ENCODE measurements at regions of chrX and their contacts with region 1.

Region 1: GRCh38 chrX:14029425-14030173 is at the start of gene GEMIN8:
- DNase-seq: peak; percentile 67 to 73
- ATAC-seq: peak; percentile 90
- H3K4me3 ChIP-seq: peak within 1 kb of the TSS; percentile 66 to 81 (median 77)
- H3K27ac ChIP-seq: peak within 1 kb of the TSS; percentile 74 to 90 (median 82)
- H3K4me1 ChIP-seq: peaks cover 4 to 30% of the 10 kb centered on the region in 2 donors
- H3K27me3 ChIP-seq: no peaks in the 10 kb centered on the region
- CTCF ChIP-seq: no peak
- POLR2A ChIP-seq: peak; percentile 56 to 64
- total RNA-seq, gene GEMIN8: 6.4 to 8.8 (median 6.9) TPM

Region 2: GRCh38 chrX:13452283-13452682 is 577.3 kb before region 1 on chrX:
- in situ Hi-C with region 1: no loop called
- intact Hi-C with region 1: no loop called
- DNase-seq: no peak
- ATAC-seq: no peak
- H3K4me3 ChIP-seq: no peak overlapping the region
- H3K27ac ChIP-seq: no peak overlapping the region
- H3K4me1 ChIP-seq: no peaks in the 10 kb centered on the region
- H3K27me3 ChIP-seq: no peaks in the 10 kb centered on the region
- CTCF ChIP-seq: no peak
- POLR2A ChIP-seq: no peak

Region 3: DNA sequence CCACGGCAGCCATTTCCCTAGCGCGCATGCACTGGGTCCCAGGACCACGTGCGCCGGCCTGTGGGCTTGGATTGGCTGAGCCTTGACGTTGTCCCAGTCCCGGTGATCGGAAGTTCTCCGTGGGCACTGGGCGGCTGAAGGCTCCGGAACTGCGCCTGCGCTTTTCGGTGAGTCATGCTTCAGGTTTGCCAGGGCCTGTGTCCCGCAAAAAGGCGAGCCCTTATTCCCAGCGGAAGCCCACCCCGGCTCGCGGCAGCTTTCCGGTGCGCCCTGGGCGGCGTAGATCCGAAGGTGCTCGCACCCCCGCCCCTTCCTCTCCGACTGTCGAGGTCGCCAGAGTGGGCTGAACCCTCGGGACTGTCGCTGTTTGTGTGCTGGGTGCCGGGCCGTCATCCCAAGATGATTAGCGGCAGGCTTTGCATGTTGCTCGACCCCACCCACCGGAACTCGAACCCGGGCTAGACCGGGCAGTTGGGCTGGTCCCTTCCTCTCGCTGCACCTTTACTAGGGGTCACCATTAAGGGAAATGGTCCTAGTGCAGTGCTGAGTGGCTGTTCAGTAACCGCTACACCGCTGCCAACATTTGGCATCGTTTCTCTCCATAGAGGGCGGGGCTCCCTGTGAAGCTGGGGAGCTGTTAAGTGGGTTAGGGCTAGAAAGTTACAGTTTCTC is 376.4 kb before region 1 on chrX and contains the start of gene TCEANC:
- in situ Hi-C with region 1: loop called in 3 of 4 experiments (anchors 5 to 25 kb)
- intact Hi-C with region 1: loop called (anchors 1 kb)
- DNase-seq: peak; percentile 92 to 94
- ATAC-seq: peak; percentile 98 to 99
- H3K4me3 ChIP-seq: peak within 1 kb of the TSS; percentile 72 to 83 (median 78)
- H3K27ac ChIP-seq: peak within 1 kb of the TSS; percentile 91 to 97 (median 94)
- H3K4me1 ChIP-seq: peaks cover 14 to 15% of the 10 kb centered on the region in 2 donors
- H3K27me3 ChIP-seq: no peaks in the 10 kb centered on the region
- CTCF ChIP-seq: no peak
- POLR2A ChIP-seq: peak; percentile 61 to 62
- total RNA-seq, gene TCEANC: 2.9 to 4.1 (median 3.3) TPM

Region 4: DNA sequence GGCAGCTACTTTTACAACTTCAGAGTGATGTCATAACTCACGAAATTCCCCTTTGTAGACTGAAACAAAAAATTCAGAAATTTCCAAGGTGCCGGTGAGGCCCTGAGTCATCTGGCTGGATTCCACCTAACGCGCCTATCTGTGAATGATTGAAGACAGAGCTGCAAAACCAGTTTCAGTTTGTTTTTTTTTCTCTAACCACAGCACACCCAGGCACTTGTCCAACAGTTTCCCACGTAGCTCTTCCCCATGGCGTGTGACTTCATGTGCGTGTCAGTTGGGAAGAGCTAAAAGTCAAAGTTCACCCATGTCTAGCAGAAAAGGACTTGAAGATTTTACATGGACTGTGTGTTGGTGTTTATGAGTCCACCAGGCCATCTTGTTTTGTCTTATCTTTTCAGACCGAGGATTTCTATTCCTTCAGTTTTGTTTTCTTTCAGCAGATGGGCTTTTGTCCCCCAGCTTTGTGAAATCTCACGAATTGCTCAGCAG is 360.3 kb before region 1 on chrX:
- in situ Hi-C with region 1: loop called in 2 of 4 experiments (anchors 10 to 25 kb)
- intact Hi-C with region 1: no loop called
- DNase-seq: no peak
- ATAC-seq: no peak
- H3K4me3 ChIP-seq: no peak overlapping the region
- H3K27ac ChIP-seq: no peak overlapping the region
- H3K4me1 ChIP-seq: no peaks in the 10 kb centered on the region
- H3K27me3 ChIP-seq: no peaks in the 10 kb centered on the region
- CTCF ChIP-seq: no peak
- POLR2A ChIP-seq: no peak

Region 5: DNA sequence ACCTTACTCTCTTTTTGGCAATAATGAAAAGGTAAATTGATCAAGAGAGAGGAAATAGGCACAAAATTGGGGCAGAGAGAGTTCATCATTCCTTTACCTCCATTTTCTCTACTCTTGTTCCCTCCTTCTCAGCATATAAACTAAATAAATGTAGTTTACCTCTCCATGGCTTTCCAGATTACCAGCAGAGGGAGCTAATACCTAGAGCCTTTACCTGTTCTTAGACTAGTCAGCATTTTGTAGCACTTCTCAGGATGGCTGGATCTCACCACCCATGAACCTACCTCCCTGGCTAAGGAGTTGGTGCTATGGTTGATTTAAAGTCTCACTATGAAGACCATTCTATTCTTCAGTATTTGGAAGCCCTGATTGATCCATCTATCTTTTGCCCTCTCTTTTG is 279.4 kb before region 1 on chrX:
- in situ Hi-C with region 1: loop called in 1 of 4 experiments (anchors 25 kb)
- intact Hi-C with region 1: loop called (anchors 2 kb)
- DNase-seq: no peak
- ATAC-seq: peak in 1 of 2 donors; percentile 58
- H3K4me3 ChIP-seq: no peak overlapping the region
- H3K27ac ChIP-seq: no peak overlapping the region
- H3K4me1 ChIP-seq: no peaks in the 10 kb centered on the region
- H3K27me3 ChIP-seq: no peaks in the 10 kb centered on the region
- CTCF ChIP-seq: peak; percentile 12 to 54 (median 33)
- POLR2A ChIP-seq: no peak

Region 6: GRCh38 chrX:13898083-13898482 is 131.5 kb before region 1 on chrX:
- in situ Hi-C with region 1: no loop called
- intact Hi-C with region 1: loop called (anchors 5 kb)
- DNase-seq: peak in 1 of 2 donors; percentile 36
- ATAC-seq: no peak
- H3K4me3 ChIP-seq: no peak overlapping the region
- H3K27ac ChIP-seq: peak overlapping the region in 1 of 4 donors; percentile 22
- H3K4me1 ChIP-seq: no peaks in the 10 kb centered on the region
- H3K27me3 ChIP-seq: no peaks in the 10 kb centered on the region
- CTCF ChIP-seq: peak in 2 of 5 experiments; percentile 6 to 16
- POLR2A ChIP-seq: no peak

Region 7: DNA sequence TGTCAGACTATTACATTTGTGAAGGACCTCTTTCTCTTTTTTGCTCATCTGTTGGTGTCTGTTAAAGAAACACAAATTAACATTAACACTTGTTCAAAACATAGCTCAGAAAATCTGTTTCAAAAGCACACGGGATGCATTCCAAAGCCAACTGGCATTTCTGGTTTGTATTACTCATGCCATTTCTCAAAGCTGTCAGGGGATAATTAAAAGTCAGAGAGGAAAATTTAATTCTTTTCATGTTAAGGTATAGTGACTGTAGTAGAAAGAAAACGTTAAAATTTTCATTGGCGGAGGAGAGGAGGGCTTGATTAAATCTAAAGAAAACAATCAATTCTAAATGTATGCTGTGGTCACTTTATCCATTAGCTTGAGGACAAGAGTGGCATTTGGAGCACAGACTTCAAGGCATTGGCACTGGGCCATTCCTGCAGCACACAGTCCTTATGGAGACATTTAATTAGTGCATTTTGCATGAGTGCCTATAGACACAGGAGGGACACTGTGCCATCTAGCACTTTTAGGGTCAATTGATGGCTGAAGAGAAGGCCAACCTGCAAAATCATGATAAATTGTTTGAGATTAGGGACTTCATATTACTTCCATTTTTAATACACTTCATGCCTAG is 478.6 kb after region 1 on chrX:
- in situ Hi-C with region 1: no loop called
- intact Hi-C with region 1: no loop called
- DNase-seq: no peak
- ATAC-seq: no peak
- H3K4me3 ChIP-seq: no peak overlapping the region
- H3K27ac ChIP-seq: no peak overlapping the region
- H3K4me1 ChIP-seq: no peaks in the 10 kb centered on the region
- H3K27me3 ChIP-seq: no peaks in the 10 kb centered on the region
- CTCF ChIP-seq: no peak
- POLR2A ChIP-seq: no peak

Region 8: GRCh38 chrX:15143050-15143824 is 1113.6 kb after region 1 on chrX:
- in situ Hi-C with region 1: loop called in 2 of 4 experiments (anchors 10 to 25 kb)
- intact Hi-C with region 1: no loop called
- DNase-seq: peak in 1 of 2 donors; percentile 9
- ATAC-seq: no peak
- H3K4me3 ChIP-seq: no peak overlapping the region
- H3K27ac ChIP-seq: no peak overlapping the region
- H3K4me1 ChIP-seq: no peaks in the 10 kb centered on the region
- H3K27me3 ChIP-seq: no peaks in the 10 kb centered on the region
- CTCF ChIP-seq: peak in 4 of 5 experiments; percentile 8 to 63 (median 38)
- POLR2A ChIP-seq: no peak